ENCODE measurements at regions of chr10 and their contacts with region 1.

Region 1: GRCh38 chr10:91919651-91920050 is 3.9 kb upstream of the BTAF1 start:
- DNase-seq: no peak
- H3K4me3 ChIP-seq: no peak overlapping the region
- H3K27ac ChIP-seq: no peak overlapping the region
- H3K4me1 ChIP-seq: peaks cover 0 to 18% (median 7%) of the 10 kb centered on the region in 6 donors
- H3K27me3 ChIP-seq: peaks cover 0 to 12% (median 0%) of the 10 kb centered on the region in 7 donors
- CTCF ChIP-seq: no peak
- POLR2A ChIP-seq: no peak

Region 2: DNA sequence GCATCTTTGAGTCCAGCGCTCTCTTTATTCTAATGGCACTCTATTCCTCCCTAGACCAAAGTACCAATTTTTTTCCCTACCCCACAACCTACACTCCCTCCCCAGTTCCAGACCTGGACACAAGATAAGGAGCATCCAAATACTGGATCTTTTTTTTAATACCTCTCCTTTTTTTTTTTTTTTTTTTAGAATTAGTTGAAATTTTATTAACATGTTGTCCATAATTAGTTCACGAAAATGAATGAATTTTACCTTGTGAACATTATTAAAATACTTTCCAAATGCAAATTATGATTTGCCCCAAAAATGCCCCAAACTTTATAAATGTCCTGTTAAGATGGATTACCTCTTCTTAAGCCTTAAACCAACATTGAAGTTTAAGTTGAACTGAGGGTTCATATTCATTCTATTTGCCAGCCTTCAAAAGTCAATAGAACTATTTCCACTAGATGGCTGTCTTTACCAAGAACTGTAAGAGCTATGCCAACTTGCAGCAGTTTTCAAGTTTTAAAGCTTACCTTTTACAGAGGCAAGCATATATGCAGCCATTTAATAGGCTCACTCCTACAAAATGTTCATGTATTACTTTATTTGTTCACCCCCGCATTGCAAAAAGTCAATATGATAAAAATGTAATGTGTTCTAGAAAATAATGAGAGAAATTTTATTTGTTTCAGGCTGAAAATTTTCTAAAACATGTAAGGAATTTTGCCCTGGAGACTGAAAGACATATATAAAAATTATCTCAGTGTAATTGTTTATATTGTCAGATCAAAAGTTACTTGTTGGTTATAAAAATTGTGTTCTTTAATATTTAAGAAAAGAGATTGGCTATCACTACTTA is 161.1 kb before region 1 on chr10:
- intact Hi-C with region 1: loop called (anchors 5 kb)
- DNase-seq: no peak
- H3K4me3 ChIP-seq: no peak overlapping the region
- H3K27ac ChIP-seq: no peak overlapping the region
- H3K4me1 ChIP-seq: no peaks in the 10 kb centered on the region
- H3K27me3 ChIP-seq: no peaks in the 10 kb centered on the region
- CTCF ChIP-seq: peak in 10 of 11 experiments; percentile 13 to 61 (median 48)
- POLR2A ChIP-seq: no peak

Region 3: GRCh38 chr10:92003258-92003657 is 83.6 kb after region 1 on chr10:
- intact Hi-C with region 1: no loop called
- DNase-seq: no peak
- H3K4me3 ChIP-seq: no peak overlapping the region
- H3K27ac ChIP-seq: no peak overlapping the region
- H3K4me1 ChIP-seq: no peaks in the 10 kb centered on the region
- H3K27me3 ChIP-seq: no peaks in the 10 kb centered on the region
- CTCF ChIP-seq: no peak
- POLR2A ChIP-seq: no peak